Uterus (tissue), 4 donors: ENCODE measurements at regions of chr14 and their contacts with region 1.

Region 1: DNA sequence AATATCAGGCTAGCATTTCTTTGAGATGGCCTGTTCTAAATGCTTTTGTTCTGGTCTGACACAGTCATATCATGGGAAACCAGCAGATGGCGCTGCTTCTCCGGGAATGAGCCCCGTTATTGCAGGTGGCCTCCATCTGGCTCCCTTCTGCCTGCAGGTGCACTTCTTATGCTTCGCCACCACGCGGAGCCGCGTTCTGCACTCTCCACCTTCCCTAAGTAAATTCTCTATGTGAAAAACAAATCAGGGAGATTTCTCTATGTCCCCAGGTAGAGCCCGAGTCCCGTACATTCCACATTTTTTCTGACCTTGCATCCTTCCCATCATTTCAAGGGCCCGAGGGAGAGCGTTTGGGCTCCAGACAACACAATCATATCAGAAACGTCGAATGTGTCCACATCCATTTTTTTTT is 26.2 kb downstream of the GLRX5 start:
- DNase-seq: peak; percentile 85
- H3K4me3 ChIP-seq: no peak overlapping the region
- H3K27ac ChIP-seq: no peak overlapping the region
- H3K4me1 ChIP-seq: no peaks in the 10 kb centered on the region
- H3K27me3 ChIP-seq: no peaks in the 10 kb centered on the region
- CTCF ChIP-seq: peak; percentile 91 to 97 (median 95)
- POLR2A ChIP-seq: no peak

Region 2: DNA sequence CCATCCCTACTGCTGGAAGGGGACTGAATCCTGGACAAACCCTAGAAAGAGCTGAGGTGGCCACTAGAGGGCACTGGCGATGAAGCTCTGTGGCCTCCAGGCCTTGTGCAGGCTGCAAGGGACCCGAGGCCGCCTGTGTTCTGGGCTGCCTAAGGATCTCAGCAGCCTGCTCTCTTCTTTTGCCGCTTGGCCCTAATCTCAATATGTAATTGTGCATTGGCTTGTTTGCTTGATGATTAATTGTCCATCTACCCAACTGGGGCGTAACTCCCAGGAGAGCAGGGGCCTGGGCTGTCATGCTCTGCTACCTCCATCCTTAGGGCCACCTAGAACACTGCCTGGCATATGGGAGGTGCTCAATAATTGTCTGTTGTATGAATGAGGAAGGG is 118.4 kb before region 1 on chr14:
- intact Hi-C with region 1: no loop called
- DNase-seq: peak; percentile 81 to 85
- H3K4me3 ChIP-seq: no peak overlapping the region
- H3K27ac ChIP-seq: peak overlapping the region in 1 of 2 donors; percentile 32
- H3K4me1 ChIP-seq: no peaks in the 10 kb centered on the region
- H3K27me3 ChIP-seq: no peaks in the 10 kb centered on the region
- CTCF ChIP-seq: peak; percentile 79 to 81 (median 80)
- POLR2A ChIP-seq: no peak

Region 3: GRCh38 chr14:95534299-95535225 is 26.4 kb before region 1 on chr14 and contains the start of gene GLRX5:
- intact Hi-C with region 1: no loop called
- DNase-seq: peak; percentile 98 to 100
- H3K4me3 ChIP-seq: peak within 1 kb of the TSS; percentile 94 to 99
- H3K27ac ChIP-seq: peak within 1 kb of the TSS; percentile 75 to 88
- H3K4me1 ChIP-seq: peaks cover 18 to 26% of the 10 kb centered on the region in 2 donors
- H3K27me3 ChIP-seq: no peaks in the 10 kb centered on the region
- CTCF ChIP-seq: peak in 3 of 4 experiments; percentile 3 to 16 (median 11)
- POLR2A ChIP-seq: peak in 1 of 2 donors; percentile 67
- total RNA-seq, gene GLRX5: 5.9 to 40.3 (median 23.7) TPM

Region 4: GRCh38 chr14:95774265-95775160 is 213.5 kb after region 1 on chr14:
- intact Hi-C with region 1: loop called (anchors 10 kb)
- DNase-seq: peak; percentile 18 to 23
- H3K4me3 ChIP-seq: no peak overlapping the region
- H3K27ac ChIP-seq: no peak overlapping the region
- H3K4me1 ChIP-seq: no peaks in the 10 kb centered on the region
- H3K27me3 ChIP-seq: no peaks in the 10 kb centered on the region
- CTCF ChIP-seq: peak; percentile 50 to 73 (median 65)
- POLR2A ChIP-seq: no peak

Region 5: DNA sequence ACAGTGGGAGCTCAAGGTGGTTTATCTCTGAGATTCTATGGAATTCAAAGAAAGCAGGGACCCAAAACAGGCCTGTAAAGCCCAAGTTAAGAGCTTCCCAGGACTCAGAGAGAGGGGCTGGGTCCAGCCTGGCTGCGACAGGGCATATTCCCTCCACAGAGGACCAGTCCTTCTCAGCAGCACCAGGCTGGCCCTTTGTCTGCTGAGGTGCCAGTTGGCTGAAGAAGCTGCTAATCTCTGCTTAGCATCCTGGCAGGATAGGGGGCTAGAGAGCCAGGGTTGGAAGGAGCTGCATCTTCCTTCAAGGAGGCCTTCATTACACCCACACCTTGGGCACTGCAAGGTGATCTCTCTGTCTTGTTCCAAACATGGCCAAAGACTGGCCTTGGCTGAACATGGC is 247.4 kb after region 1 on chr14:
- intact Hi-C with region 1: no loop called
- DNase-seq: no peak
- H3K4me3 ChIP-seq: no peak overlapping the region
- H3K27ac ChIP-seq: no peak overlapping the region
- H3K4me1 ChIP-seq: no peaks in the 10 kb centered on the region
- H3K27me3 ChIP-seq: no peaks in the 10 kb centered on the region
- CTCF ChIP-seq: no peak
- POLR2A ChIP-seq: no peak

Region 6: DNA sequence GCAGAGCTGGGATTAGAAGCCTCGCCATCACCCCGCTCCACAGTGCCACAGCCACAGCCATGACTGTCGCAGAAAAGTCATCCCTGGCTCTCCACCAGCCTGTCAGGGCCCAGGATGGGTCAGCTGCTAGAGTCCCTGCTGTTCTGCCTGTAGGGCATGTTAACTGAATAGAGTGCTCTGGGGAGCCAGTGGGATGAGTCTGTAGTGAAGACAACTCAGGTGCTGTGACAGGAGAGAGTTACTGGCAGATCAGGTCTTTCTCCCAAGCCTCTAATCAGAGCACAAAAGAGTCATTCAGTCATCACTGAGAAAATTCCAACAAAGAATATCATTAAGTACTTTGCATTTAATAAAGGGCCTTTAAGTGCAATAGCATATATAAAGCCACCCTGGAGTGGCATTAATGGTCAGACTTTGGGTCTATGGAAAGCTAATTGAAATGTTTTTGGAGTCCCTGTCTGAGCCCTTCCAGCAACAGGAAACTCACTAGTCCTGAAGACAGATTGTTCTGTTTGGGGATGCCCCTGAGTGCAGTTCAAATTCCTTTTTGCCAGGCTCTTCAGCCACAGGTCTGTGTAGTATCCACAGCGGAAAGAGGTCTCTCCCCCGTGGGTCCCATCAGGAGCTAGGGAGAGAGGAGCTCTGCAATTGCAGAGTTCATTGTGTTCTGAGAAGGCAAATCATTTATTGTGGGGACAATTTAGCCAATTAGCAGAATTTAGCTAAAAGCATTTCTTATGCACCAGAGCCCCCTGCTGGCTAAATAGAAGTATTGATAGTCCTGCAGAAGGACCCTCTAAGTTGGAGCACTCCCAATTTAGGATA is 433.0 kb after region 1 on chr14:
- intact Hi-C with region 1: loop called (anchors 5 kb)
- DNase-seq: peak; percentile 17 to 31
- H3K4me3 ChIP-seq: no peak overlapping the region
- H3K27ac ChIP-seq: no peak overlapping the region
- H3K4me1 ChIP-seq: no peaks in the 10 kb centered on the region
- H3K27me3 ChIP-seq: no peaks in the 10 kb centered on the region
- CTCF ChIP-seq: peak; percentile 59 to 87 (median 82)
- POLR2A ChIP-seq: no peak